Gastrocnemius medialis (tissue), 4 donors: ENCODE measurements at regions of chr1 and their contacts with region 1.

Region 1: GRCh38 chr1:23854568-23854967 is 13.5 kb downstream of the FUCA1 start:
- DNase-seq: no peak
- ATAC-seq: peak in 1 of 2 donors; percentile 47
- H3K4me3 ChIP-seq: no peak overlapping the region
- H3K27ac ChIP-seq: no peak overlapping the region
- H3K4me1 ChIP-seq: peaks cover 0 to 5% of the 10 kb centered on the region in 2 donors
- H3K27me3 ChIP-seq: no peaks in the 10 kb centered on the region
- CTCF ChIP-seq: peak in 4 of 5 experiments; percentile 37 to 64 (median 57)
- POLR2A ChIP-seq: no peak

Region 2: DNA sequence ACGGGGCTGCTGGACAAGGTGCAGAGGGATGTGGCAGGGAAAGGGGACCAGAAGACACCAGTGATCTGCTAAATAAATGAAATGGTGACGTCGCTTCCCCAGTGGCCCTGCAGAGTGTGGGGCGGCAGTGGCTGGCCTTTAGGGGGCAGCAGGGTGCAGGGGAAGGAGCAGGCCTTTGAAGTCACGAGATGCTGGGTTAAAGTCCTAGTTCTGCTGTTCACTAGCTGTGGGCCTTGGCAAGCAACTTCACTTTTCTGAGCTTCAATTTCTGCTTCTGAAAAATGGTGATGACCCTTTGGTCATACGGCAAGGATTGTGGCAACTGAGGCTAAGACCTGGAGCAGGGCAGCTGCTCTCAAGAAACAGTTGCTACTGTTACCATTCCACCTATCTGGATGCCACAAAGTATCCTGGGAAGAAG is 44.8 kb before region 1 on chr1:
- in situ Hi-C with region 1: loop called in 1 of 4 experiments (anchors 5 kb)
- intact Hi-C with region 1: loop called (anchors 2 kb)
- DNase-seq: peak; percentile 61 to 76
- ATAC-seq: peak; percentile 90 to 91
- H3K4me3 ChIP-seq: no peak overlapping the region
- H3K27ac ChIP-seq: peak overlapping the region in 3 of 4 donors; percentile 39 to 53 (median 52)
- H3K4me1 ChIP-seq: peaks cover 0 to 6% of the 10 kb centered on the region in 2 donors
- H3K27me3 ChIP-seq: no peaks in the 10 kb centered on the region
- CTCF ChIP-seq: peak; percentile 64 to 90 (median 85)
- POLR2A ChIP-seq: no peak